ENCODE measurements at regions of chr1 and their contacts with region 1.

Region 1: DNA sequence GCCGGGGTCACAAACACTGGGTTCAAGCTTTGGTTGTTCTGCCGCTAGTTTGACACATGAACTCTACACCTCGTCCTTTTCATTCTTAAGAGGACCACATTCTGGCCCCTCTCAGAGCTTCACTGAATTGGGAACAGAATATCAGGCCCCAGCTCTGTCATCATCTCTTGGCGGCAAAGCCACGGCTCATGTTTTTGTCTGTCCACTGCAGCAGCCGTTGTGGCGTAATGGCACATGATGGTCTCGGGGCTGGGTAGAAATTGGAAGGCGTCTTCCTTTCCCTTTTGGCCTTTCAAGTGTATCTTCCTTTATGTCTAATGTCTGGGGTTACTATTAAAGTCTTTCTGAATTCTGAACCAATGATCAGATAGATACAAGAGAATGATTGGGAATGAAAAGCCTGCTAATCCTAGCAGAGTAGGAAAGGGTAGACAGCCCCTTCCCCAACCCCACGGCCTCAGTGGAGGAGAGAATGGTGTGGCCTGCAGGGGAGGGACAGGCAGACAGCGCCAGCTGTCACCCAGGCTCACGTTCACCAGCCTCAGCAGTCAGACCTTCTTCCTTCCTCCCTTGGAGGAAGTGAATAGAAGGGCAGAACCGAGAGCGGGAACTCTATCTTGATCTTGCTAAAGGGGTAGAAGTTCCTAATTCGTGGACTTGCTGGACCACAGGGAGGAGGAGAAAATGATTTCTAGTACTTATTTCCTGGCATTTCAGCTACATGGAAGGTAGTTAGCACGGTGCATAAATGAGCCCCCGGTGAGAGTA is 498.1 kb downstream of the KIF26B start:
- DNase-seq: no peak
- H3K4me3 ChIP-seq: no peak overlapping the region
- CTCF ChIP-seq: no peak

Region 2: GRCh38 chr1:245585252-245585959 is 67.4 kb before region 1 on chr1:
- in situ Hi-C with region 1: loop called (anchors 5 kb)
- DNase-seq: peak; percentile 57
- H3K4me3 ChIP-seq: no peak overlapping the region
- CTCF ChIP-seq: no peak

Region 3: DNA sequence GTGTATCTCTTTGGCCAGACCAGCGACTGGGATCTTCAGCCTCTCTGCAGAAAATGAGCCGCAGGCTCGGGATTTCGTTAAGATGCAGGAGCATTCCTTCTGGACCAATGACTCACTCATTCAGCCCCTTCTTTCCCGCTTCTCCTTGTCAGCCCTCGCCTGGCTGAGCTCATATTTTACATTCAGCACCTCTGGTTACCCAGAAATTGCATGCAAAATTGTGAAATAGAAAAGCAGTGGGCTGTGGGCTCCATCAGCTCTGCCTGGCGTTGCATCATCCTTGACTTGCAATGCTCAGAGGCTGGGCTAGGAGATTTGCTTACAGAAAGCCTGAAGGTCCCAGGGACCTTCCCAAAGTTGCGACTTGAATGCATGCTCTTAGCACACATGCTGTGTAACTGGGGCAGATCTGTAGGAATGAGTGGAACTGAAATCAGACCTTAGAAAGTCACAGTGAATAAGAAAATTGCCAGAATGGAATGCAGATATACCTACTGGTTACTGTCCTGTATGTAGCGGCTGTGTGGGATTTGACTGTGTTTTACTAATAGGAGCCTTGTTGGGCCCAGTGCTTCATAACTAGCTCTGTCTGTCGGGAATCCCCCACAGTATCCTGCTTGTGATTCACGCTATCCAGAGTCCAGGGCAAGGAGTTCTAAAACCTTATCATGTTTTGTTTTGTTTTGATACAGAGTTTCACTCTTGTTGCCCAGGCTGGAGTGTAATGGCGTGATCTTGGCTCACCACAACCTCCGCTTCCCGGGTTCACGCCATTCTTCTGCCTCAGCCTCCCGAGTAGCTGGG is 53.3 kb before region 1 on chr1:
- in situ Hi-C with region 1: no loop called
- DNase-seq: peak; percentile 86
- H3K4me3 ChIP-seq: no peak overlapping the region
- CTCF ChIP-seq: no peak

Region 4: DNA sequence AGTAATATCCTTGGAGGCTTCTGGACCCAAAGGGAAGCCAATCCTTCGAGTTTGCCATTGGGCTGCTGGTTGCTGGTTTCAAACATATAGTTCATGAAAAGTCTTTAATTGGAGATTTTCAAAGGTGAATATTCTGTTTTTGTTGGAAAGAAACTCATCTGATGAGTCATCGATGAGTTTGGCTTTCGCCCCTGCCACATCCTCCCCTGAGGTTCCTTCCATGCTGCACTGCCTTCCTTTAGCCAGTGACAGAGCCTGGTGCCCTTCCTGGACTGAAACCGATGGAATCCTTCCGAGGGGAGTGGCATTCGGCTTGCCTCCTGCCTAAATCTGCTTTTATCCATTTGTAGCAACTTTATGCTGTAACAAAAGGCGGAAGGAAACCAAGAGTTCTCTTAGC is 51.9 kb after region 1 on chr1:
- in situ Hi-C with region 1: loop called (anchors 5 kb)
- DNase-seq: peak; percentile 33
- H3K4me3 ChIP-seq: no peak overlapping the region
- CTCF ChIP-seq: peak; percentile 23